ENCODE measurements at regions of chr16 and their contacts with region 1.

Region 1: GRCh38 chr16:23826528-23827045 is 9.2 kb upstream of the PRKCB start:
- DNase-seq: no peak
- ATAC-seq: peak; percentile 40
- H3K4me3 Mint-ChIP-seq: peak overlapping the region; percentile 40
- H3K27ac Mint-ChIP-seq: peak overlapping the region; percentile 83
- H3K4me1 Mint-ChIP-seq: peaks cover 31% of the 10 kb centered on the region
- H3K27me3 Mint-ChIP-seq: no peaks in the 10 kb centered on the region

Region 2: GRCh38 chr16:23803591-23804123 is 22.9 kb before region 1 on chr16:
- CTCF ChIA-PET with region 1: interaction called, 4 read pairs
- POLR2A ChIA-PET with region 1: no interaction called
- intact Hi-C with region 1: loop called (anchors 1 to 2 kb)
- DNase-seq: peak; percentile 84
- ATAC-seq: peak; percentile 88
- H3K4me3 Mint-ChIP-seq: peak overlapping the region; percentile 1
- H3K27ac Mint-ChIP-seq: peak overlapping the region; percentile 42
- H3K4me1 Mint-ChIP-seq: peaks cover 12% of the 10 kb centered on the region
- H3K27me3 Mint-ChIP-seq: peaks cover 2% of the 10 kb centered on the region

Region 3: DNA sequence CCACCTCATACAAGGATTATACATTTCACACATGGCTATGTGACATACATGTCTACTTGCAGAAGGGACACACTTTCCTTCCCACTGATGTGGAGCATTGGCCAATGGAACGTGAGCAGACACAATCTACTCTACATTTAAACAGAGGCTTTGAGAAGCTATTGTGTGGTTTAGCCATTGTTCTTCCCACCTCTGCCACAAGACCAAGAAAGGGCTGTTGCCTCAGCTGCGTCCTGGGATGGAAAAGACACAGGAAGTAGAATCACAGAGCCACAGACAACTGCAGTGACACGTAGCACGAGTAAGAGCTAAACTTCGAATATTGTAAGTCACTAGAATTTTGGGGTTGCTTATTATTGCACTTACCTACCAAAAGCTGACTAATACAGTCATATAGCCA is 42.5 kb after region 1 on chr16:
- CTCF ChIA-PET with region 1: interaction called, 6 read pairs
- POLR2A ChIA-PET with region 1: no interaction called
- intact Hi-C with region 1: loop called in 1 of 2 experiments (anchors 5 kb)
- DNase-seq: peak; percentile 64
- ATAC-seq: peak; percentile 91
- H3K4me3 Mint-ChIP-seq: no peak overlapping the region
- H3K27ac Mint-ChIP-seq: peak overlapping the region; percentile 73
- H3K4me1 Mint-ChIP-seq: peaks cover 65% of the 10 kb centered on the region
- H3K27me3 Mint-ChIP-seq: no peaks in the 10 kb centered on the region

Region 4: DNA sequence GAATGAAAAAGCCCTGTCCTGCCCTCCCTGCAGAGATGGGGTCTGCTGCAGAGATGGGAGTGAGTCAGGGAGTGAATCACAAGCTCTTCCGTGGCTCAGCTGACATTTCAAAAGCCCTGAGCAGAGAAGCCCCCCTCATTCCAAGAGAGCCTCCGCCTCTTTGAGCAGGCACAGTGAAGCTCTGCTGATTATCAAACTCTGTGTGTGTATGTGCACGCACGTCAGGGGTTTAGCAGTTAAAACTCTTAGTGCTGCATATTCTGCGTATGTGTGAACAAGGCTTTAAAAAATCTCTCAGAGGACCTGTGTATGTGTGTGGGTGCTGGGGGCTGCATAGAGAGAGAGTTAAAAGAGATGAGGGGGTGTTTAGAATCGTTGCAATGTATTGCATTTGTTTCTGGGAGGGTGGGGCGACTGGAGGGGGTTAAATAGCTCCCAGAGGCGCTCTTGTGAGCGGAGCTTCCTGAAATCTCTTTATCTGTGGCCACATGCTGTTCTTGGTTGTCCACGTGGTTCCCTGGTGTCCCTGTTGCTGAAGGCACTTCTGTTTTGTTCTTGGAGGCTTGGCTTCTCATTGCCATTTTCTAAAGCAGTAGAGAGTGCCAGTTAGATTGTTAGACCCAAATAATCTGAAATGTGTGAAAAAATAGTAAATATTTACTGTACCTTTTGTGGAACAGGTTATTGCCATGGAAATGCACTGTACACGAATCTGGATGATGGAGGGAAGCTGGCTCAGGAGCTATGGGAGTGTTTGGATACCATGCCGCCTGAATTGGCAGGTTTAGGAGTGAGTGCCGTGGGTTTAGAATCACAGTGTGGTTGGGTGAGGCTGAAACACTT is 125.8 kb after region 1 on chr16:
- CTCF ChIA-PET with region 1: no interaction called
- POLR2A ChIA-PET with region 1: interaction called, 3 read pairs
- intact Hi-C with region 1: loop called in 1 of 2 experiments (anchors 5 kb)
- DNase-seq: peak; percentile 67
- ATAC-seq: peak; percentile 75
- H3K4me3 Mint-ChIP-seq: peak overlapping the region; percentile 13
- H3K27ac Mint-ChIP-seq: peak overlapping the region; percentile 84
- H3K4me1 Mint-ChIP-seq: peaks cover 82% of the 10 kb centered on the region
- H3K27me3 Mint-ChIP-seq: no peaks in the 10 kb centered on the region

Region 5: GRCh38 chr16:24085666-24086065 is 259.1 kb after region 1 on chr16:
- CTCF ChIA-PET with region 1: no interaction called
- POLR2A ChIA-PET with region 1: no interaction called
- intact Hi-C with region 1: no loop called
- DNase-seq: no peak
- ATAC-seq: no peak
- H3K4me3 Mint-ChIP-seq: no peak overlapping the region
- H3K27ac Mint-ChIP-seq: no peak overlapping the region
- H3K4me1 Mint-ChIP-seq: peaks cover 2% of the 10 kb centered on the region
- H3K27me3 Mint-ChIP-seq: no peaks in the 10 kb centered on the region

Region 6: GRCh38 chr16:24139282-24139681 is 312.7 kb after region 1 on chr16:
- CTCF ChIA-PET with region 1: no interaction called
- POLR2A ChIA-PET with region 1: no interaction called
- intact Hi-C with region 1: loop called in 1 of 2 experiments (anchors 1 kb)
- DNase-seq: peak; percentile 27
- ATAC-seq: peak; percentile 99
- H3K4me3 Mint-ChIP-seq: no peak overlapping the region
- H3K27ac Mint-ChIP-seq: peak overlapping the region; percentile 24
- H3K4me1 Mint-ChIP-seq: peaks cover 24% of the 10 kb centered on the region
- H3K27me3 Mint-ChIP-seq: no peaks in the 10 kb centered on the region

Region 7: GRCh38 chr16:24721830-24722238 is 895.2 kb after region 1 on chr16:
- CTCF ChIA-PET with region 1: no interaction called
- POLR2A ChIA-PET with region 1: no interaction called
- intact Hi-C with region 1: loop called in 1 of 2 experiments (anchors 5 kb)
- DNase-seq: peak; percentile 81
- ATAC-seq: peak; percentile 90
- H3K4me3 Mint-ChIP-seq: no peak overlapping the region
- H3K27ac Mint-ChIP-seq: peak overlapping the region; percentile 6
- H3K4me1 Mint-ChIP-seq: peaks cover 29% of the 10 kb centered on the region
- H3K27me3 Mint-ChIP-seq: peaks cover 2% of the 10 kb centered on the region